ENCODE measurements at regions of chr14 and their contacts with region 1.

Region 1: DNA sequence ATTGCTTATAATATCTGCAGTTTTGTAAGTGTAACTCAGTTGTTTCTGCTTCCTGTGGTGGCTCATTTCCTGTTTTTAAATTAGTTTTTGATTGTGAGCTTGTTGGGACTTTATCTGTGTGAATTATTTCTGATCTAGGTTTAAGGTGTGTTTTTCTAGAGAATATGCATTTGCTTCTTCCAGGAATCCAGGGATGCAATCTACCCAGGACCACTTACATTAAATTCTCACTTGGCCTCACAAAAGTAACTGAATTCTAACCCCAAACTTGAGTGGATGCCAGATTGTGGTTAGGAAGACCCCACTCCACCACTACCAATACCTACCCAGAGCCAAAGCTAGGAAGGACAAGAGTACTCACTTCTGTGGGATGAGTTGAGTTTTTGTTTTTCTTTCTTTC is 11.9 kb downstream of the STYX start:
- DNase-seq: peak in 2 of 5 donors; percentile 13 to 48
- H3K4me3 ChIP-seq: peak overlapping the region; percentile 53
- H3K4me3 Mint-ChIP-seq: peak overlapping the region; percentile 67 to 90 (median 83)
- H3K27ac ChIP-seq: peak overlapping the region; percentile 57
- H3K27ac Mint-ChIP-seq: peak overlapping the region; percentile 88 to 98 (median 96)
- H3K4me1 ChIP-seq: peaks cover 79% of the 10 kb centered on the region
- H3K4me1 Mint-ChIP-seq: peaks cover 60 to 86% (median 79%) of the 10 kb centered on the region in 3 donors
- H3K27me3 ChIP-seq: no peaks in the 10 kb centered on the region
- H3K27me3 Mint-ChIP-seq: no peaks in the 10 kb centered on the region

Region 2: DNA sequence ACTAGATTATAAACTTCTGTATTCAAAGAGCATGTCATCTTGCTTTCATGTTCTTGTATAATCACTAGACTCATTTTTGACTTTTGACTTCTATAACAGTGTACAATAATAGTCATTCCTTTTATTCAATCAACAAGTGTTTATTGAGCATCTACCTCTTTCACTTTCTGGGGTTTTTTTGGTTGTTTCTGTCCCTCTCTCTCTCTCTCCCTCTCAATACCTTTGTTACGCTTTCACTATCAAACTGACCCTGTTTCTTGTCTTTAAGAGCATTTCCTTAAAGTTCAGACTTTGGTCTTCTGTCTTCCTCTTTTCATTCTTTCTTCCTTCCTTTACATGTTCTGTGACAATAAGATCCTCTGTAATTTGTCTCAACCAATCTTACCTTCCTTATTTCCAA is 139.7 kb before region 1 on chr14:
- CTCF ChIA-PET with region 1: no interaction called
- POLR2A ChIA-PET with region 1: no interaction called
- DNase-seq: no peak
- H3K4me3 ChIP-seq: no peak overlapping the region
- H3K4me3 Mint-ChIP-seq: no peak overlapping the region
- H3K27ac ChIP-seq: no peak overlapping the region
- H3K27ac Mint-ChIP-seq: peak overlapping the region in 1 of 8 donors; percentile 4
- H3K4me1 ChIP-seq: no peaks in the 10 kb centered on the region
- H3K4me1 Mint-ChIP-seq: peaks cover 0 to 3% (median 0%) of the 10 kb centered on the region in 3 donors
- H3K27me3 ChIP-seq: no peaks in the 10 kb centered on the region
- H3K27me3 Mint-ChIP-seq: peaks cover 6 to 19% of the 10 kb centered on the region in 2 donors

Region 3: GRCh38 chr14:52729925-52730667 is 11.8 kb before region 1 on chr14 and contains the start of gene STYX:
- CTCF ChIA-PET with region 1: interaction called, 13 read pairs
- POLR2A ChIA-PET with region 1: interaction called, 22 read pairs
- DNase-seq: peak; percentile 94 to 98 (median 97)
- H3K4me3 ChIP-seq: peak within 1 kb of the TSS; percentile 96
- H3K4me3 Mint-ChIP-seq: peak within 1 kb of the TSS; percentile 91 to 98 (median 94)
- H3K27ac ChIP-seq: peak within 1 kb of the TSS; percentile 81
- H3K27ac Mint-ChIP-seq: peak within 1 kb of the TSS; percentile 84 to 99 (median 92)
- H3K4me1 ChIP-seq: peaks cover 28% of the 10 kb centered on the region
- H3K4me1 Mint-ChIP-seq: peaks cover 34 to 41% (median 41%) of the 10 kb centered on the region in 3 donors
- H3K27me3 ChIP-seq: no peaks in the 10 kb centered on the region
- H3K27me3 Mint-ChIP-seq: peaks cover 0 to 1% of the 10 kb centered on the region in 2 donors
- total RNA-seq, gene STYX: 20.9 to 21.2 TPM